Activated naive CD4-positive, alpha-beta T cell treated with anti-CD3 and anti-CD28 coated beads for 36 hours (primary cell): ENCODE measurements at regions of chr16 and their contacts with region 1.

Region 1: GRCh38 chr16:3029537-3030402 is 5.9 kb downstream of the THOC6 start:
- DNase-seq: peak; percentile 52
- H3K4me3 Mint-ChIP-seq: peak overlapping the region; percentile 14
- H3K27ac Mint-ChIP-seq: no peak overlapping the region
- H3K4me1 Mint-ChIP-seq: peaks cover 20% of the 10 kb centered on the region
- H3K27me3 Mint-ChIP-seq: peaks cover 39% of the 10 kb centered on the region

Region 2: DNA sequence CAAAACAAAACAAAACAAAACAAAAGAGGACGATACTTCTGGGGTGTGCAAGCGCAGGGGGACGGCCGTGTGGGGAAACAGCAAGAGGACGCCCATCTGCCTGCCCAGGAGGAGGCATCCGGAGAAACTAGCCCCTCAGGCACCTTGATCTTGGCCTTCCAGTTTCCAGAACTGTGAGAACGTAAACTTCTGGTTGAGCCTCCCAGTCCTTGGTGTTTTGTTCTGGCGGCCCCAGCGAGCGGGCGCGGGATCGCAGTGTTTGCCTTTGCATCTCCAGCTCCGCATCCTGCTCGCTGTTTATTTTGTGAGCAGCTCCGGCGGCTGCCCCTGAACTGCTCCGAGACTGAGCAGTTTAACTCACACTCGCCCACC is 15.6 kb after region 1 on chr16:
- CTCF ChIA-PET with region 1: interaction called, 98 read pairs
- intact Hi-C with region 1: no loop called
- DNase-seq: peak; percentile 57
- H3K4me3 Mint-ChIP-seq: peak overlapping the region; percentile 66
- H3K27ac Mint-ChIP-seq: no peak overlapping the region
- H3K4me1 Mint-ChIP-seq: peaks cover 15% of the 10 kb centered on the region
- H3K27me3 Mint-ChIP-seq: peaks cover 36% of the 10 kb centered on the region

Region 3: GRCh38 chr16:3051494-3051893 is 21.7 kb after region 1 on chr16:
- CTCF ChIA-PET with region 1: interaction called, 24 read pairs
- intact Hi-C with region 1: loop called (anchors 5 kb)
- DNase-seq: no peak
- H3K4me3 Mint-ChIP-seq: no peak overlapping the region
- H3K27ac Mint-ChIP-seq: peak overlapping the region; percentile 4
- H3K4me1 Mint-ChIP-seq: peaks cover 35% of the 10 kb centered on the region
- H3K27me3 Mint-ChIP-seq: peaks cover 7% of the 10 kb centered on the region

Region 4: DNA sequence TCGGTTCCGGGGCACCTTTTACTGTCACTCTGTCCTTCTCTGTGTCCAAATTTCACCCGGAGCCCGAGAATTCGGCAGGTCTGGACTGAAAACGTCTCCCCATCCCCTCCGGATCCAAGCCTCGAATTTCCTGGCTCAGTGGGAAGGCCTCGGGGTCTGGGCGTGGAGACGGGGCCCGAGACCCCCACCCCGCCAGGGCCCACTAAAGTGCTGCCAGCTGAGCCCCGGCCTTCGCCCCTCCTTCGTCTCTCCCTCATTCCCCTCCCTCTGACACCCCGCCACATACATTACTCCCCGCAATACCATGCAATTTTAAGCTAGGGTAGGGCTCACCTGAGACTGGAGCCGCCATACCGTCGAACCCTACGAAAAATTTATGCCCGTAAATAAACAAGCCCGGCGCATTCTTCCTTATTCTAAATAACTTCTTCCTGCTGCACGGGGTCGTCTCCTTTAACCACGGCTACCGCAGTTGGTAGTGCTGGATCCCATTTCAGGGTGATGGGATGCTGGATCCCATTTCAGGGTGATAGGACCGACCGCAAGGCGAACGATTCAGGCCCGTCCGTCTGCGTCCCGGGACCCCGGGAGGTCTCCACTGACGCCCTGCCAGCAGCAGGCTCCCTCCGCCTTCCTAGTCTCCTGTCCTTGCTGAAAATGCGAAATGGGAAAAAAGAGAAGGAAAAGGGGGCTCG is 153.8 kb after region 1 on chr16:
- CTCF ChIA-PET with region 1: no interaction called
- intact Hi-C with region 1: no loop called
- DNase-seq: no peak
- H3K4me3 Mint-ChIP-seq: peak overlapping the region; percentile 81
- H3K27ac Mint-ChIP-seq: no peak overlapping the region
- H3K4me1 Mint-ChIP-seq: peaks cover 29% of the 10 kb centered on the region
- H3K27me3 Mint-ChIP-seq: peaks cover 65% of the 10 kb centered on the region

Region 5: GRCh38 chr16:3761375-3762106 is 731.8 kb after region 1 on chr16:
- CTCF ChIA-PET with region 1: no interaction called
- intact Hi-C with region 1: no loop called
- DNase-seq: no peak
- H3K4me3 Mint-ChIP-seq: no peak overlapping the region
- H3K27ac Mint-ChIP-seq: peak overlapping the region; percentile 24
- H3K4me1 Mint-ChIP-seq: no peaks in the 10 kb centered on the region
- H3K27me3 Mint-ChIP-seq: no peaks in the 10 kb centered on the region